Colonic mucosa (tissue), 4 donors: ENCODE measurements at regions of chr14 and their contacts with region 1.

Region 1: DNA sequence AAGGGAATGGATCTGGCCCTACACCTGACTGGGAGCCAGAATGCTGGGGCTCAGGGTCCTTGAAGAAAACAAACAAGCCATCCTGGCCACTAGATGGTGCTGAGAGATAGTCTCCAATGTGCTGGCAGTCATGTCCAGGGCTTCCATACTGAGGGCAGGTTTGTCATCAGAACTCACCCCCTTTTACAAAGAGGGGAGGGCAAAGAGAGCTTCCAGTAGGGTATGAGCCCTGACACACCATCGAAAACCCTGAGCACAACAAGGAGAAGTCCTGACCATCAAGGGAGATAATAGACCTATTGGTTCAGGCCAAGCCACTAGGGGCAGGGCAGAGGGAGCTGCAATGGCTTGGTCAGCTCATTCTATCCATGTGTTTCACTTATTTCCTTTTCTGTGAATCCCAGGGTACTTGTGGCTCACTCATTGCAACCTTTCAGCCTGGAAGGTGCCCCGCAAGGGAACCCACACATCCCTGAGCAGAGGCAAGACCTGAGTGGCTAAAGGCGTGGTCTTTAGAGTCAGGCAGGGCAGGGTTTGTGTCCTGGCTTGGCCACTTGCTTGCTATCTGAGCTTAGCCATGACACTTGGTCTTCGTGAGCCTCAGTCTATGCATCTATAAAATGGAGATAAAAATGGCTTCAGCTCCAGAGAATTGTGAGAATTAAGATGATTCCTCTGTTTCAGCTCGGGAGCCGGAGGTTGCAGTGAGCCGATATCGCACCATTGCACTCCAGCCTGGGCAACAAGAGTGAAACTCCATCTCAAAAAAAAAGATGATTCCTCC is 6.2 kb upstream of the PLEKHH1 start:
- DNase-seq: peak; percentile 70
- H3K4me3 ChIP-seq: no peak overlapping the region
- H3K27ac ChIP-seq: no peak overlapping the region
- H3K4me1 ChIP-seq: no peaks in the 10 kb centered on the region
- H3K27me3 ChIP-seq: no peaks in the 10 kb centered on the region
- CTCF ChIP-seq: peak; percentile 69

Region 2: GRCh38 chr14:67276131-67276530 is 250.7 kb before region 1 on chr14:
- intact Hi-C with region 1: no loop called
- DNase-seq: no peak
- H3K4me3 ChIP-seq: no peak overlapping the region
- H3K27ac ChIP-seq: no peak overlapping the region
- H3K4me1 ChIP-seq: no peaks in the 10 kb centered on the region
- H3K27me3 ChIP-seq: no peaks in the 10 kb centered on the region
- CTCF ChIP-seq: no peak

Region 3: DNA sequence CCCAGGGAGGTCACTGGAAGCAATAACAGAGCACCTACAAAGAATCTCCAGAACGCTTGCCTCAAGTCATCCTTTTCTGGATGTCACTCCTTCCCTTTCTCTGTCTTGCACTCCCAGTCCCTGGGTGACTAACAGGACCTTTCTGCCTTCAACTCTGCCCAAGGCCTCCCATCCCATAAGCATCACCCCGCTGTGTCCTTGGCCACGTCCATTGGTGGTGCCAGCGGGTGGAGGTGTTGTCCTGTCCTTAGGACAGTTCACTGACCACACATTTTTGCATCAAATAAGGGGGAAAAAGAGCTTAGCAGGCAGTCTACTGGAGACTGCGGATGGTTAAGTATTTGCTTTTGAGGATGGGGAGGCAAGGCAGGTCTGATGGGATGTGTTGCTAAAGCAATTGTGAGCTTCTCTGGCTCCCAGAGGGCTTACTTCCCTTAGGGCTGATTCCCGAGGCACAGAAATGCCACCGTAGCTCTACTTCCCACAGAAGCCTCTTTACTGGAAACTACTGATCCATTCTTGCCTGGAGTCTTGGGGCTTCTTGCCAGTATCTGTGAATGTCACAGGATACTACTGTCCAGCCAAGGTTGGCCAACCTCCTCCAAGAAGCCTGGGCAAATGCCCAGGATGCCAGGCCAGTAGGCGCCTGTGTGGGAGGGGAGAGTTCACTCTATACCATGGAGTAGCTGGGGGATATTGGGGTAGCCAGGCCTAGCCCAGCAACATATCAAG is 91.1 kb before region 1 on chr14:
- intact Hi-C with region 1: loop called (anchors 10 kb)
- DNase-seq: no peak
- H3K4me3 ChIP-seq: no peak overlapping the region
- H3K27ac ChIP-seq: no peak overlapping the region
- H3K4me1 ChIP-seq: no peaks in the 10 kb centered on the region
- H3K27me3 ChIP-seq: no peaks in the 10 kb centered on the region
- CTCF ChIP-seq: no peak

Region 4: GRCh38 chr14:67571272-67571850 is 44.5 kb after region 1 on chr14:
- intact Hi-C with region 1: loop called (anchors 2 kb)
- DNase-seq: peak; percentile 71
- H3K4me3 ChIP-seq: no peak overlapping the region
- H3K27ac ChIP-seq: no peak overlapping the region
- H3K4me1 ChIP-seq: no peaks in the 10 kb centered on the region
- H3K27me3 ChIP-seq: no peaks in the 10 kb centered on the region
- CTCF ChIP-seq: peak; percentile 78

Region 5: GRCh38 chr14:67619446-67620216 is 92.8 kb after region 1 on chr14 and contains the start of gene ARG2:
- intact Hi-C with region 1: no loop called
- DNase-seq: peak; percentile 99
- H3K4me3 ChIP-seq: peak within 1 kb of the TSS; percentile 59
- H3K27ac ChIP-seq: peak within 1 kb of the TSS; percentile 66
- H3K4me1 ChIP-seq: no peaks in the 10 kb centered on the region
- H3K27me3 ChIP-seq: no peaks in the 10 kb centered on the region
- CTCF ChIP-seq: no peak
- total RNA-seq, gene ARG2: 4.7 to 11.5 TPM

Region 6: DNA sequence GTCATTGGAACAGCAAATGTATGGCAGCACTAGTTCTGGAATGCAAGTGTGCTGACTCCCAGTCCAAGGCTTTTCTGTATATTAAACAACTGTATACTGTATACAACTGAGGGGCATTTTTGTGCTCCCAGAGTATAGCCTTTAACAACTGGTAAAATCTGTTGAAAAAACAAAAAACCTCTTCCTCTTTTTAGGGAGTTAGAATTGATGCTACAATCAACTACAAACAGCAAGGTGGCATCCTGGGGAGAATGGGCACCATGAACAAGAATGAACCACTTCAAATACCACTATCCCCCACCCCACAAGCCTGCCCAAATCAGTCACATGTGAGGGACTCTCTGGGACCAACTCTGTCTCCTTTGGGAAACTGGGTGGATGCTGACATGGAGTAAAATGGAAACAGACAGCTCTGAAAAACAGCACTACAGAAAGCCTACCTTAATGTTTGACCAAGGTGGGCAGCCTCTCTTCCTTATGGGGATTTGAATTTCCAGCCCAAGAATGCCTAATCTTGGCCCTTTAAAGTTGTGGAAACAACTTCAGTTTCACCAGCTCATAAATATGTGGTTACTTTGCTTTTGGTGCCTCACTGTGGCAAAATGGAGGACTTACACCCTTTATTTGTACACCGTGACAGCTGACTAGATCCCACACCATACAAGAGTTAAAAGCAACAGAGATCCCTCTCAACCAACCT is 140.0 kb after region 1 on chr14:
- intact Hi-C with region 1: loop called (anchors 5 kb)
- DNase-seq: peak; percentile 30
- H3K4me3 ChIP-seq: no peak overlapping the region
- H3K27ac ChIP-seq: no peak overlapping the region
- H3K4me1 ChIP-seq: peaks cover 3% of the 10 kb centered on the region
- H3K27me3 ChIP-seq: no peaks in the 10 kb centered on the region
- CTCF ChIP-seq: peak; percentile 59

Region 7: GRCh38 chr14:67704484-67705089 is 177.7 kb after region 1 on chr14:
- intact Hi-C with region 1: loop called (anchors 10 kb)
- DNase-seq: peak; percentile 40
- H3K4me3 ChIP-seq: no peak overlapping the region
- H3K27ac ChIP-seq: no peak overlapping the region
- H3K4me1 ChIP-seq: no peaks in the 10 kb centered on the region
- H3K27me3 ChIP-seq: no peaks in the 10 kb centered on the region
- CTCF ChIP-seq: peak; percentile 52